GM12878 (cell line): ENCODE measurements at regions of chr19 and their contacts with region 1.

Region 1: DNA sequence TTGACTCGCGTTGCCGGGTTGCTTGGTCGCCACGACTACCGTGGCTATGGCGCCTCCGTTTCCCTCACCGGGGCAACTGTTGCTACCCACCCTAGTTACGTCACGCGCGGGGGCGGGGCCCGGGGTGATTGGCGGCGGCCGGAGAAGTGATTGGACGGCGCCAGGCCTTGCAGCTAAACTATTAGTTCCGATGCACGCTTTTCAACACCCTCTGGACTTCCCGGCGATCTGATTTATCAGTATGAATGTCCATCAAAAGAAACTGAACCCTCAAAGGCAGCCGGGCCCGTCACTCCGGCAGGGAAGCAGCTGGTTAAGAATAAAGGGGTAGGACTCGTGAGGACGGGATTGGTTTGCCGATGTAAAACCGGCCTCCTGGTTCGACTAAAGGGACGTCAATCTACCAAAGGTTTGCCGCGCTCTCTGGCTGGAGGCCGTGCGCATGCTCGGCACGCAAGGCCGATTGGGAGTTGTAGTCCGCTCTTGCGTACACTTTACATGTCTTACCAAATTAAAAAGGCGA is at the start of gene RFX1:
- DNase-seq: peak; percentile 99
- ATAC-seq: peak; percentile 86
- H3K4me3 ChIP-seq: peak within 1 kb of the TSS; percentile 79
- H3K27ac ChIP-seq: peak within 1 kb of the TSS; percentile 95
- H3K4me1 ChIP-seq: peaks cover 41% of the 10 kb centered on the region
- H3K27me3 ChIP-seq: no peaks in the 10 kb centered on the region
- CTCF ChIP-seq: no peak
- EP300 ChIP-seq: peak in 1 of 2 experiments; percentile 79; a peak in 1 of 4 replicates
- POLR2A ChIP-seq: no peak
- RAD21 ChIP-seq: no peak
- polyA plus RNA-seq, gene RFX1: 0.05 to 0.29 TPM

Region 2: GRCh38 chr19:13861732-13862531 is 144.4 kb before region 1 on chr19:
- CTCF ChIA-PET with region 1: no interaction called
- POLR2A ChIA-PET with region 1: no interaction called
- RAD21 ChIA-PET with region 1: no interaction called
- SMC1A ChIA-PET with region 1: no interaction called
- in situ Hi-C with region 1: no loop called
- intact Hi-C with region 1: no loop called
- DNase-seq: peak; percentile 79
- ATAC-seq: peak; percentile 91
- H3K4me3 ChIP-seq: peak overlapping the region; percentile 74
- H3K27ac ChIP-seq: peak overlapping the region; percentile 99
- H3K4me1 ChIP-seq: peaks cover 8% of the 10 kb centered on the region
- H3K27me3 ChIP-seq: peaks cover 0 to 1% of the 10 kb centered on the region in 2 experiments; a peak in 2 of 4 replicates
- CTCF ChIP-seq: peak; percentile 87 to 98 (median 93)
- EP300 ChIP-seq: peak; percentile 48 to 56; a peak in 2 of 4 replicates
- POLR2A ChIP-seq: peak; percentile 87
- RAD21 ChIP-seq: peak; percentile 96

Region 3: GRCh38 chr19:13942023-13942684 is 64.2 kb before region 1 on chr19:
- CTCF ChIA-PET with region 1: no interaction called
- POLR2A ChIA-PET with region 1: no interaction called
- RAD21 ChIA-PET with region 1: no interaction called
- SMC1A ChIA-PET with region 1: no interaction called
- in situ Hi-C with region 1: no loop called
- intact Hi-C with region 1: no loop called
- DNase-seq: no peak
- ATAC-seq: no peak
- H3K4me3 ChIP-seq: no peak overlapping the region
- H3K27ac ChIP-seq: no peak overlapping the region
- H3K4me1 ChIP-seq: no peaks in the 10 kb centered on the region
- H3K27me3 ChIP-seq: no peaks in the 10 kb centered on the region; a peak in 1 of 4 replicates
- CTCF ChIP-seq: no peak
- EP300 ChIP-seq: no peak
- POLR2A ChIP-seq: no peak
- RAD21 ChIP-seq: no peak

Region 4: DNA sequence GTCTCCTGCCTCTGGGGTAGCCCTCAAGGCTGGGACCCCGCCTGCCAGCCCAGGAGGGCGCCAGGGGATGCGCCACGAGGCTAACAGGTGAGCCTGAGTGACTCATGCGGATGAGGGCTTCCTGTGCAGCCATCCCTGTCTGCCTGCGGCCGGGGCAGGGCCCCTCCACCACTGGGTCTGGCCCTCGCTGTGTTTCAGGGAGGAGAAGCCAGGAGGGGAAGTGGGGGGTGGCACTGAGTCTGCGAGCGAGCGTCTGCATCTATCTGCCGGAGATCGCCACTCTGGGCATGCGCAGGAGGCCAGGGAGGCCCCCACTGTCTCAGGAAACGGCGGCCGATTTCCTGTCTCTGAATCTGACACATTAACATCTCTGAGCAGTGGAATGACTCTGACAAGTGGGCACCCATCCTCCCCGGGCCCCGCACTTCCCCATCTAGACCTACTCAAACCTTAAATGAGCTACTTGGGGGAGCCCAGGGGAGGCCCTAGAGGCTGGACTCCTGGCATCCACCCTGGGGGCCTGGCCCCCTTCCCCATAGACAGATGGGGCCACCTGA is 19.9 kb before region 1 on chr19:
- CTCF ChIA-PET with region 1: interaction called, 4 read pairs
- POLR2A ChIA-PET with region 1: interaction called, 49 read pairs
- RAD21 ChIA-PET with region 1: interaction called, 35 read pairs
- SMC1A ChIA-PET with region 1: interaction called, 15 read pairs
- in situ Hi-C with region 1: no loop called
- intact Hi-C with region 1: loop called (anchors 2 kb)
- DNase-seq: peak; percentile 93
- ATAC-seq: peak; percentile 97
- H3K4me3 ChIP-seq: peak overlapping the region; percentile 49; the same call in 1 of the 2 replicates
- H3K27ac ChIP-seq: peak overlapping the region; percentile 94
- H3K4me1 ChIP-seq: peaks cover 27% of the 10 kb centered on the region
- H3K27me3 ChIP-seq: no peaks in the 10 kb centered on the region
- CTCF ChIP-seq: no peak
- EP300 ChIP-seq: 0 out of 4 replicates have a peak, but pooled peaks have one; percentile 27 to 47
- POLR2A ChIP-seq: peak; percentile 86
- RAD21 ChIP-seq: peak; percentile 14; the same call in 1 of the 2 replicates

Region 5: GRCh38 chr19:14181906-14182305 is 175.6 kb after region 1 on chr19:
- CTCF ChIA-PET with region 1: no interaction called
- POLR2A ChIA-PET with region 1: no interaction called
- RAD21 ChIA-PET with region 1: no interaction called
- SMC1A ChIA-PET with region 1: no interaction called
- in situ Hi-C with region 1: no loop called
- intact Hi-C with region 1: no loop called
- DNase-seq: no peak
- ATAC-seq: no peak
- H3K4me3 ChIP-seq: no peak overlapping the region
- H3K27ac ChIP-seq: no peak overlapping the region
- H3K4me1 ChIP-seq: no peaks in the 10 kb centered on the region
- H3K27me3 ChIP-seq: no peaks in the 10 kb centered on the region
- CTCF ChIP-seq: no peak
- EP300 ChIP-seq: no peak
- POLR2A ChIP-seq: no peak
- RAD21 ChIP-seq: no peak